ENCODE measurements at regions of chr2 and their contacts with region 1.

Region 1: GRCh38 chr2:55168221-55169154 is 63.6 kb downstream of the CLHC1 start:
- DNase-seq: peak; percentile 68
- ATAC-seq: peak; percentile 57
- H3K4me3 ChIP-seq: no peak overlapping the region
- H3K4me3 Mint-ChIP-seq: no peak overlapping the region
- H3K27ac ChIP-seq: no peak overlapping the region
- H3K27ac Mint-ChIP-seq: no peak overlapping the region
- H3K4me1 ChIP-seq: no peaks in the 10 kb centered on the region
- H3K4me1 Mint-ChIP-seq: no peaks in the 10 kb centered on the region
- H3K27me3 ChIP-seq: no peaks in the 10 kb centered on the region
- H3K27me3 Mint-ChIP-seq: no peaks in the 10 kb centered on the region
- CTCF ChIP-seq: peak; percentile 81

Region 2: GRCh38 chr2:54899576-54900200 is 268.8 kb before region 1 on chr2:
- CTCF ChIA-PET with region 1: interaction called, 54 read pairs
- POLR2A ChIA-PET with region 1: no interaction called
- intact Hi-C with region 1: loop called (anchors 1 kb)
- DNase-seq: peak; percentile 27
- ATAC-seq: peak; percentile 36
- H3K4me3 ChIP-seq: no peak overlapping the region
- H3K4me3 Mint-ChIP-seq: no peak overlapping the region
- H3K27ac ChIP-seq: no peak overlapping the region
- H3K27ac Mint-ChIP-seq: no peak overlapping the region
- H3K4me1 ChIP-seq: no peaks in the 10 kb centered on the region
- H3K4me1 Mint-ChIP-seq: no peaks in the 10 kb centered on the region
- H3K27me3 ChIP-seq: no peaks in the 10 kb centered on the region
- H3K27me3 Mint-ChIP-seq: no peaks in the 10 kb centered on the region
- CTCF ChIP-seq: peak; percentile 29

Region 3: DNA sequence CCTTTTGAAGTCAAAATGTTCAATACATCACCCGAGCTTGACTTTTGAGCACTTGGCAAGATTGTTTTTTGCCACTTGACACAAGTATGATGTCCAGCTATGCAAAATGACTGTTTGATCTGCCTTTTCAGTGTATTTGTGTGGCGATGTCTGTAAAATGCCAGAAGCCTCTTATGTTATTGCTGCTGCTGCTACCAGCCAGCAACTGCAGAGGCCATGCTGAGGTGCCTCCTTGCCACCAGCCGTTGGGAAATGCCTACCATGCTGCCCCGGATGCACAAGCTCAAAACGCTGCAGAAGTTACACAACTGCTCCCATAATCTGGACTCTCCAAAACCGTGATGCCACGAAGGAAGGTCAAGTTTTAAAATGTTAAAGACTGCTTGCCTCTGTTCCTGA is 198.5 kb before region 1 on chr2:
- CTCF ChIA-PET with region 1: interaction called, 5 read pairs
- POLR2A ChIA-PET with region 1: no interaction called
- intact Hi-C with region 1: loop called (anchors 5 kb)
- DNase-seq: no peak
- ATAC-seq: no peak
- H3K4me3 ChIP-seq: no peak overlapping the region
- H3K4me3 Mint-ChIP-seq: no peak overlapping the region
- H3K27ac ChIP-seq: no peak overlapping the region
- H3K27ac Mint-ChIP-seq: no peak overlapping the region
- H3K4me1 ChIP-seq: peaks cover 0 to 5% of the 10 kb centered on the region in 2 donors
- H3K4me1 Mint-ChIP-seq: peaks cover 15% of the 10 kb centered on the region
- H3K27me3 ChIP-seq: no peaks in the 10 kb centered on the region
- H3K27me3 Mint-ChIP-seq: no peaks in the 10 kb centered on the region
- CTCF ChIP-seq: no peak

Region 4: DNA sequence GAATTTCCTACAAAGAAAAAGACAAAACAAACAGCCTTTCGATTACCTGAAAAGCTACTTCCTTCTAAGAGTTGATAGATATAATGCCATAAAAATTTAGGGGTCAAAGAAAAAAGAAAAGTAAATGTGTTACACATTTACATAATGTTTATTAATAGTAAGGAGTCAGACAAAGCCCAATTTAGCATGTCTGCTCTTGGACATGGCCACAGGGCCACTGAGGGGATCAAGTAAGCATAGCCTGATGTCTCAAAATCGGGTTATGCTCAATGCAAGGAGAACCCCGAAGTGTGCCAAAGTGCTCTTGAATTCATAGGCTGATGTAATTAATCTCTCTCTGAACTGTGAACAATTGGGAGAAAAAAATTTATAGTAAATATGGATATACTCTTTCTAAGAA is 179.9 kb before region 1 on chr2:
- CTCF ChIA-PET with region 1: no interaction called
- POLR2A ChIA-PET with region 1: no interaction called
- intact Hi-C with region 1: no loop called
- DNase-seq: no peak
- ATAC-seq: no peak
- H3K4me3 ChIP-seq: no peak overlapping the region
- H3K4me3 Mint-ChIP-seq: no peak overlapping the region
- H3K27ac ChIP-seq: no peak overlapping the region
- H3K27ac Mint-ChIP-seq: no peak overlapping the region
- H3K4me1 ChIP-seq: peaks cover 0 to 3% of the 10 kb centered on the region in 2 donors
- H3K4me1 Mint-ChIP-seq: peaks cover 16% of the 10 kb centered on the region
- H3K27me3 ChIP-seq: no peaks in the 10 kb centered on the region
- H3K27me3 Mint-ChIP-seq: no peaks in the 10 kb centered on the region
- CTCF ChIP-seq: no peak

Region 5: DNA sequence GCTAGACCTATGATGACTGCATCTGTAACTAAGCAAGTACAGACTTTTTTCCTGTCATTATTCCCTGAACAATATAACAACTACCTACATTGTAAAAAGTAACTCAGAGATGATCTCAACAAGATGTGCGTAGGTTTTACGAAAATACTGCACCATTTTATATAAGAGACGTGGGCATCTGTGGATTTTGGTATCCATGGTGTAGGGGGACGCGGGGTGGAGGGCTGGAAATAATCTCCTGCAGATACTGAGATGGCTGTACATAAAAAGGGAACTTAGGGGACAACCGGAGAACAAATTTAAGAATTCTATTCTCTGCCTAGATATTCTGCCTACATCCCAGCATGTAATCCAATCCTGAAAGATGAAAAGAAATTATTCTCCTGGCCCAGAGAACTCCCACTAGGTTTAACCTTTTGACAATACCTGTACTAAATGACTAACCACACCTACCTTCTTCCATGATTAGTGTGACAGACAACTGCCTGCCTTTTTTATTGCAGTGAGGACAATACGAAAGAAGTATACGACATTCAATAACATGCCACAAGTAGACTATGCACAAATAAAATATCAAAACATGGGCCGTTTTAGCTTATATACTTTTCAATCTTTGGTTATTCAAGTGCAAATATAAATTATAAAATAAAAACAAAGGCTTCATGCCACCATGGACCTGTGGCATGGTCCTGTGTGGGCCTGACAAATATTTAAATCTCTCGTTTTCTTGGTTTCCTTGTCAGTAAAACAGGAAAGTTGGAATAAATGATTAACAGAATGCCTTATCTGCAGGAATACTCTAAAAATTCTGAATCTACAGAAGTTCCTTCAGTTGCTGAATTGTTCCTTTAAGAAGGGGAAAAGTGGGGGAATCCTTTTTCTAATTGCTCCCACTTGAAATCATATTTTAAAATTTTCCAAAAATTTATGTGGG is 164.5 kb before region 1 on chr2:
- CTCF ChIA-PET with region 1: interaction called, 190 read pairs
- POLR2A ChIA-PET with region 1: no interaction called
- intact Hi-C with region 1: no loop called
- DNase-seq: no peak
- ATAC-seq: no peak
- H3K4me3 ChIP-seq: no peak overlapping the region
- H3K4me3 Mint-ChIP-seq: no peak overlapping the region
- H3K27ac ChIP-seq: no peak overlapping the region
- H3K27ac Mint-ChIP-seq: no peak overlapping the region
- H3K4me1 ChIP-seq: peaks cover 13 to 29% of the 10 kb centered on the region in 2 donors
- H3K4me1 Mint-ChIP-seq: peaks cover 65% of the 10 kb centered on the region
- H3K27me3 ChIP-seq: no peaks in the 10 kb centered on the region
- H3K27me3 Mint-ChIP-seq: no peaks in the 10 kb centered on the region
- CTCF ChIP-seq: no peak

Region 6: GRCh38 chr2:55010149-55010591 is 158.3 kb before region 1 on chr2:
- CTCF ChIA-PET with region 1: interaction called, 190 read pairs
- POLR2A ChIA-PET with region 1: no interaction called
- intact Hi-C with region 1: loop called (anchors 1 kb)
- DNase-seq: peak; percentile 78
- ATAC-seq: peak; percentile 95
- H3K4me3 ChIP-seq: peak overlapping the region; percentile 2 to 48 (median 38)
- H3K4me3 Mint-ChIP-seq: peak overlapping the region; percentile 91
- H3K27ac ChIP-seq: peak overlapping the region; percentile 1 to 73
- H3K27ac Mint-ChIP-seq: peak overlapping the region; percentile 55
- H3K4me1 ChIP-seq: peaks cover 19 to 43% of the 10 kb centered on the region in 2 donors
- H3K4me1 Mint-ChIP-seq: peaks cover 63% of the 10 kb centered on the region
- H3K27me3 ChIP-seq: no peaks in the 10 kb centered on the region
- H3K27me3 Mint-ChIP-seq: no peaks in the 10 kb centered on the region
- CTCF ChIP-seq: no peak

Region 7: GRCh38 chr2:55014962-55015939 is 153.2 kb before region 1 on chr2:
- CTCF ChIA-PET with region 1: interaction called, 190 read pairs
- POLR2A ChIA-PET with region 1: no interaction called
- intact Hi-C with region 1: loop called (anchors 1 kb)
- DNase-seq: peak; percentile 63
- ATAC-seq: peak; percentile 37
- H3K4me3 ChIP-seq: no peak overlapping the region
- H3K4me3 Mint-ChIP-seq: no peak overlapping the region
- H3K27ac ChIP-seq: no peak overlapping the region
- H3K27ac Mint-ChIP-seq: peak overlapping the region; percentile 22
- H3K4me1 ChIP-seq: peaks cover 21 to 41% of the 10 kb centered on the region in 2 donors
- H3K4me1 Mint-ChIP-seq: peaks cover 57% of the 10 kb centered on the region
- H3K27me3 ChIP-seq: no peaks in the 10 kb centered on the region
- H3K27me3 Mint-ChIP-seq: no peaks in the 10 kb centered on the region
- CTCF ChIP-seq: peak; percentile 64

Region 8: GRCh38 chr2:55150834-55151233 is 17.7 kb before region 1 on chr2:
- CTCF ChIA-PET with region 1: interaction called, 39 read pairs
- POLR2A ChIA-PET with region 1: no interaction called
- intact Hi-C with region 1: no loop called
- DNase-seq: peak; percentile 81
- ATAC-seq: peak; percentile 94
- H3K4me3 ChIP-seq: no peak overlapping the region
- H3K4me3 Mint-ChIP-seq: peak overlapping the region; percentile 10
- H3K27ac ChIP-seq: no peak overlapping the region
- H3K27ac Mint-ChIP-seq: peak overlapping the region; percentile 91
- H3K4me1 ChIP-seq: peaks cover 36 to 53% of the 10 kb centered on the region in 2 donors
- H3K4me1 Mint-ChIP-seq: peaks cover 49% of the 10 kb centered on the region
- H3K27me3 ChIP-seq: no peaks in the 10 kb centered on the region
- H3K27me3 Mint-ChIP-seq: no peaks in the 10 kb centered on the region
- CTCF ChIP-seq: no peak

Measured in B cell (primary cell).